Ovary (tissue), 10 donors: ENCODE measurements at regions of chr12 and their contacts with region 1.

Region 1: DNA sequence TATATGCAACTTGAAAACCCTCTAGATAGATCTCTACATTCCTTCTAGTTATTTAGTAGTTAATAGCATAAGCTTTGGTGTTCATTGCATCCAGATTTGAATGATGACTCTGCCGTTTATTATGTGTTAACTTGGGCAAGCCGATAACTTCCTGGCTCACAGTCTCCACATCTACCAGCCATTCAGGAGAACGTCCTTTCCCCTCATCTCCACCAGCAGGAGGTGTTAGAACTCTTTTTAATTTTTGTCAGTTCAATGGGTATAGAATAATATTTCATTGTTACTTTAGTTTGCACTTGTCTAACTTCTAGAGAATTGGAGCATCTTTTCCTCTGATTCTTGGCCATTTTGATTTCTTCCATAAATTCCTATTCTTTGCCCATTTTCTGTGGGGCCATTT is 30.0 kb upstream of the WSCD2 start:
- DNase-seq: no peak
- H3K4me3 ChIP-seq: no peak overlapping the region
- H3K27ac ChIP-seq: no peak overlapping the region
- H3K4me1 ChIP-seq: no peaks in the 10 kb centered on the region
- H3K27me3 ChIP-seq: no peaks in the 10 kb centered on the region
- CTCF ChIP-seq: no peak
- EP300 ChIP-seq: no peak
- POLR2A ChIP-seq: no peak

Region 2: DNA sequence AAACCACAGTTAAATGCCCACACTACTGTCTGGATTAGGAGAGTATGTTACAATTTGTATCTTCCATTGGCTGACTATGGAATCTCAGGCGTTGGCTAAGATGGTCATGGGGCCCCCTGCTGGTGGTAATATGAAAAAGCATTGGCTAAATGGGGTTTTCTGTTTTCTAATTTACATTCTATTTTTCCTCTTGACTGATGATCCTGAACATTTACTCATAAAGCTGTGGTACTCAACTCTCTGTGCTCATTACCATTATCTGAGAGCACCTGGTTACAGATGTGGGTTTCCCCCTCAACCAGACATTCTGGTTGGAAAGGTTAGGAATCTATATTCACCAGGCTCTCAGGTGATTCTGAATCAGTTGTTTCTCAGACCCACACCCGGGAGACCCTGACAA is 94.8 kb after region 1 on chr12:
- intact Hi-C with region 1: loop called in 1 of 4 experiments (anchors 10 kb)
- DNase-seq: no peak
- H3K4me3 ChIP-seq: no peak overlapping the region
- H3K27ac ChIP-seq: no peak overlapping the region
- H3K4me1 ChIP-seq: no peaks in the 10 kb centered on the region
- H3K27me3 ChIP-seq: no peaks in the 10 kb centered on the region
- CTCF ChIP-seq: no peak
- EP300 ChIP-seq: no peak
- POLR2A ChIP-seq: no peak

Region 3: GRCh38 chr12:109331301-109331952 is 1232.4 kb after region 1 on chr12:
- intact Hi-C with region 1: no loop called
- DNase-seq: no peak
- H3K4me3 ChIP-seq: no peak overlapping the region
- H3K27ac ChIP-seq: no peak overlapping the region
- H3K4me1 ChIP-seq: peaks cover 8% of the 10 kb centered on the region
- H3K27me3 ChIP-seq: no peaks in the 10 kb centered on the region
- CTCF ChIP-seq: no peak
- EP300 ChIP-seq: no peak
- POLR2A ChIP-seq: no peak